MCF 10A (cell line): ENCODE measurements at regions of chr20 and their contacts with region 1.

Region 1: GRCh38 chr20:58998656-58999055 is 8.4 kb downstream of the CTSZ start:
- DNase-seq: no peak
- H3K4me3 Mint-ChIP-seq: no peak overlapping the region
- H3K27ac Mint-ChIP-seq: no peak overlapping the region
- H3K4me1 Mint-ChIP-seq: peaks cover 14% of the 10 kb centered on the region
- H3K27me3 Mint-ChIP-seq: no peaks in the 10 kb centered on the region
- CTCF ChIP-seq: no peak

Region 2: GRCh38 chr20:58746620-58747019 is 252.0 kb before region 1 on chr20:
- CTCF ChIA-PET with region 1: no interaction called
- POLR2A ChIA-PET with region 1: no interaction called
- intact Hi-C with region 1: no loop called
- DNase-seq: no peak
- H3K4me3 Mint-ChIP-seq: no peak overlapping the region
- H3K27ac Mint-ChIP-seq: no peak overlapping the region
- H3K4me1 Mint-ChIP-seq: no peaks in the 10 kb centered on the region
- H3K27me3 Mint-ChIP-seq: peaks cover 99% of the 10 kb centered on the region
- CTCF ChIP-seq: no peak

Region 3: GRCh38 chr20:59010995-59011873 is 12.6 kb after region 1 on chr20:
- CTCF ChIA-PET with region 1: interaction called, 5 read pairs
- POLR2A ChIA-PET with region 1: interaction called, 12 read pairs
- intact Hi-C with region 1: no loop called
- DNase-seq: peak; percentile 59
- H3K4me3 Mint-ChIP-seq: no peak overlapping the region
- H3K27ac Mint-ChIP-seq: peak overlapping the region; percentile 58
- H3K4me1 Mint-ChIP-seq: peaks cover 24% of the 10 kb centered on the region
- H3K27me3 Mint-ChIP-seq: no peaks in the 10 kb centered on the region
- CTCF ChIP-seq: no peak